GM10248 (cell line): ENCODE measurements at regions of chr20 and their contacts with region 1.

Region 1: DNA sequence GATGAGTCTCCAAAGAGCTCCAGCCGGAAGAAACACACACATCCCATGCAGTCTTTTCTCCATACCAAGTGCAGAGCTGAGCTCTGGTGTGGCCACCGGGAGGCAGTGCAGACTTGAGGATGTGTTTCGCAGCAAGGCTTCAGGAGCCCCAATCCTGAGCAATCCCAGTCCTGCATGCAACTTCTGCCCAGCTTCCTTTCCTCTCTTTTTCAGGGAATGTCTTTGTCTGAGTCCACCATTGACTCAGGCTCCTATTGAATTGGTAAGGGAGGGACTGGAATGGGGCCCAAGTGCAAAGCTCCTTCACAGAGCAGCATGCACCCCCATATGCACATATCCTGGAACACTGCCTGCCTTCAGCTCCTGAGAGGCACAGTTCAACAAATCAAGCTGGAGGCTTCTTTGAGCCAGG is 50.5 kb upstream of the ASIP start:
- DNase-seq: peak; percentile 66
- CTCF ChIP-seq: peak; percentile 87

Region 2: DNA sequence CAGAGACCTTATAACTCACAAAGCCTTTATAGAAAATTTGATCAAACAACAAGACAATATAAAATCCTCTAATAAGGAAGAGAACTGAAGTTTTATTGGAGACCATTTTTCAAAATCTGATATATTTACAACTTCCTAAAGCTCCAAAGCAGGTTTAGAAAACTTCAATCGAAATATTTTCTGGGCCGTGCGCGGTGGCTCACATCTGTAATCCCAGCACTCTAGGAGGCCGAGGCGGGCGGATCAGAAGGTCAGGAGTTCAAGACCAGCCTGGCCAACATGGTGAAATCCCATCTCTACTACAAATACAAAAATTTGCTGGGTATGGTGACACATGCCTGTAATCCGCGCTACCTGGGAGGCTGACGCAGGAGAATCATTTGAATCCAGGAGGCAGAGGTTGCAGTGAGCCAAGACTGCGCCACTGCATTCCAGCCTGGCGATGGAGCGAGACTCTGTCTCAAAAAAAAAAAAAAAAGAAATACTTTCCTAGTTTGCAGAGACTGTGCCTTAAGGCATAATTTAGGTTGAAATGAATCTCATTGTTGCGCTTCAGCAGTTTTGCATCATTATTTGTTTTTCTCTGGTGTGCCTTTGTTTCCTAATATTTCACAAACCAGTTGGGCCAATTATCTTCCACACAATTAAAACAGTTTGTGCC is 10.1 kb before region 1 on chr20:
- CTCF ChIA-PET with region 1: interaction called, 10 read pairs
- POLR2A ChIA-PET with region 1: no interaction called
- DNase-seq: no peak
- CTCF ChIP-seq: no peak

Region 3: GRCh38 chr20:34232494-34233087 is 41.9 kb after region 1 on chr20:
- CTCF ChIA-PET with region 1: no interaction called
- POLR2A ChIA-PET with region 1: no interaction called
- DNase-seq: no peak
- CTCF ChIP-seq: no peak